Esophagus muscularis mucosa (tissue), 4 donors: ENCODE measurements at regions of chr11 and their contacts with region 1.

Region 1: GRCh38 chr11:100978442-100978841 is 151.2 kb downstream of the PGR start:
- DNase-seq: no peak
- H3K4me3 ChIP-seq: no peak overlapping the region
- H3K27ac ChIP-seq: no peak overlapping the region
- H3K4me1 ChIP-seq: no peaks in the 10 kb centered on the region
- H3K27me3 ChIP-seq: no peaks in the 10 kb centered on the region
- CTCF ChIP-seq: no peak
- EP300 ChIP-seq: no peak
- POLR2A ChIP-seq: no peak

Region 2: DNA sequence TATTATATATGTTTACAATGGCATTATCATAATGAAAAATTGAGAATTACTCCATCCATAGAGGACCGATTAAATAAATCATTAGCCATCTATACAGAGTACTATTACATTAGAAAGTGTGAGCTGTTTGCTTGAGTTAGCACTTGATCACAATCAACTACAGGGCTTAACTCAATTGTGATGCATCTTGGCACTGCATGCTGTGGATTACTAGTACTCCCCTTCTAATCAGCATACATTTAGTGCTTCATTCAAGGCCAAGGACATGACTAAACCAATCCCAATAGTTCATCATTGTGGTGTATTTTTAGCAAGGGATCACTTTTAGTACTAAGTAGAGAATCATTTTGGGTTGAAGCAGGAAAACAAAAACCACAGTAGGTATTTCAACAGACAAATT is 314.9 kb before region 1 on chr11:
- intact Hi-C with region 1: no loop called
- DNase-seq: no peak
- H3K4me3 ChIP-seq: no peak overlapping the region
- H3K27ac ChIP-seq: no peak overlapping the region
- H3K4me1 ChIP-seq: no peaks in the 10 kb centered on the region
- H3K27me3 ChIP-seq: no peaks in the 10 kb centered on the region
- CTCF ChIP-seq: no peak
- EP300 ChIP-seq: no peak
- POLR2A ChIP-seq: no peak

Region 3: DNA sequence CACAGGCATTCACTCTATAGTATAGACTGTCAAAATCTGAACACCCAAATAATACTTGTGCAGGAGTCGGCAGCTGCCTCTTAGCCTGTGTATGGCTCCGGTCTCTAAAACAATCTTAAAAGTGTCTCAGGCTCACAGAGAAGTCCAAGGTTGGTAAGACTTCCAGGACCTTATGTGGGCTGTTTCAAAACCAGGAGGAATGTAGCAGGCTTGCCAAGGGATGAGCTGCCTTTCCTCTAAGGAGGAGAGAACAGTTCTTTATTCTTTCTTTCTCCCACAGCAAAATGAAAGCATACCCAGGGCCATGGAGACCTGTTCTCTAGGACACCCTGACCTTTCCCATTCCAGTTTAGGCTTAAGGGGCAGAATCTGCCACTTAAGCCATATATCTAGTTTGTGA is 428.9 kb after region 1 on chr11:
- intact Hi-C with region 1: no loop called
- DNase-seq: no peak
- H3K4me3 ChIP-seq: peak overlapping the region in 3 of 4 donors; percentile 14 to 32 (median 18)
- H3K27ac ChIP-seq: peak overlapping the region; percentile 54 to 63 (median 60)
- H3K4me1 ChIP-seq: peaks cover 0 to 29% (median 17%) of the 10 kb centered on the region in 4 donors
- H3K27me3 ChIP-seq: no peaks in the 10 kb centered on the region
- CTCF ChIP-seq: no peak
- EP300 ChIP-seq: no peak
- POLR2A ChIP-seq: no peak

Region 4: DNA sequence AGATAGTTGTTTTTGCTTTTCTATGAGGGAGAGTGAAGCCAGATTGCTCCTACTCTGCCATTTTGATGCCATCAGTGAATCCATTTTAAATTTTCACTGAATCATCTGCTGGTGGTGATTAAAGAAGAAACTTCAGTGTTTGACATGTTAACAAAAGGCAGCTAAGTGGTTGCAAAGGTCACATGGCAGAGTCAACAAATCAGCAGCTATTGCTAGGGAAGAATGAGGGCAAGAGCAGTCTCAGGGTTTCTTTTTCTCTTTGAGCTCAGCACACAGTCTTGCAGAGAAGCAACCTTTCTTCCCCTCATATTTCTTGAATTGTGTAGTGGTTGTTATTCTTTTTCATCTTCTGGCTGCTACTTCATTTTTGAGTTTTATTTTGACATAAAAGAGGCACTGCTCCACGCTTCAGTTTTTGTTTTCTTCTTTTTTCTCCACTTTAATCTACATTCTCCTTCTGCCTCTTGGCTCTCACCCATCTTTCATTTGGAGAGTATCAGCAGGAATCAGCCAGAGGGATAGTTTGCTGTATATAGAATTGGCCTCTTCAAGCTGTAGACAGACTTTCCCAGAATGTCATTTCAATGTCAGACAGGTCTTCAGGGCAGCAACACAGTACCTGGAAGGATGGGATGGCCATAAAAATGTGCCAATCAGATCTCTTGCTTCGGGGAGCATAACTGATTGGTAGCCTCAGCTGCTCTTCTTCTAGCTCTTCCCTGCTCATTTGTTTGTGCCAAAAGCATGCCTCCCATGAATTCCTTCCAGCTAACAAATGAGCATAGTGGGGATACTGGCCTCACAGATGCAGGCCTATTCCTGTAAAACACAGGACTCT is 451.5 kb after region 1 on chr11:
- intact Hi-C with region 1: loop called (anchors 5 kb)
- DNase-seq: no peak
- H3K4me3 ChIP-seq: no peak overlapping the region
- H3K27ac ChIP-seq: peak overlapping the region; percentile 8 to 40 (median 35)
- H3K4me1 ChIP-seq: peaks cover 0 to 31% (median 26%) of the 10 kb centered on the region in 4 donors
- H3K27me3 ChIP-seq: no peaks in the 10 kb centered on the region
- CTCF ChIP-seq: no peak
- EP300 ChIP-seq: no peak
- POLR2A ChIP-seq: no peak